Endothelial cell of umbilical vein (primary cell): ENCODE measurements at regions of chr4 and their contacts with region 1.

Region 1: GRCh38 chr4:139279760-139280620 is at the start of gene MGARP:
- DNase-seq: peak; percentile 73
- H3K4me3 ChIP-seq: peak within 1 kb of the TSS; percentile 59 to 80 (median 68)
- H3K27ac ChIP-seq: no peak within 1 kb of the TSS
- H3K4me1 ChIP-seq: peaks cover 26% of the 10 kb centered on the region
- H3K27me3 ChIP-seq: no peaks in the 10 kb centered on the region
- CTCF ChIP-seq: peak in 1 of 2 donors; percentile 2
- POLR2A ChIP-seq: peak; percentile 53
- total RNA-seq, gene MGARP: 16.2 and 25.9 TPM in 2 replicates

Region 2: GRCh38 chr4:139229534-139230039 is 50.4 kb before region 1 on chr4:
- CTCF ChIA-PET with region 1: interaction called, 11 read pairs
- POLR2A ChIA-PET with region 1: no interaction called
- dilution Hi-C with region 1: no loop called
- intact Hi-C with region 1: loop called (anchors 5 kb)
- DNase-seq: peak; percentile 64
- H3K4me3 ChIP-seq: no peak overlapping the region
- H3K27ac ChIP-seq: no peak overlapping the region
- H3K4me1 ChIP-seq: no peaks in the 10 kb centered on the region
- H3K27me3 ChIP-seq: no peaks in the 10 kb centered on the region
- CTCF ChIP-seq: peak; percentile 36 to 50
- POLR2A ChIP-seq: no peak